ENCODE measurements at regions of chr2 and their contacts with region 1.

Region 1: GRCh38 chr2:40160751-40161218 is 291.1 kb downstream of the SLC8A1 start:
- DNase-seq: no peak
- ATAC-seq: peak in 3 of 8 donors; percentile 6 to 42 (median 27)
- H3K4me3 ChIP-seq: no peak overlapping the region
- H3K27ac ChIP-seq: peak overlapping the region in 3 of 10 donors; percentile 0 to 30 (median 4)
- H3K4me1 ChIP-seq: peaks cover 4 to 30% (median 18%) of the 10 kb centered on the region in 9 donors
- H3K27me3 ChIP-seq: no peaks in the 10 kb centered on the region
- CTCF ChIP-seq: no peak

Region 2: DNA sequence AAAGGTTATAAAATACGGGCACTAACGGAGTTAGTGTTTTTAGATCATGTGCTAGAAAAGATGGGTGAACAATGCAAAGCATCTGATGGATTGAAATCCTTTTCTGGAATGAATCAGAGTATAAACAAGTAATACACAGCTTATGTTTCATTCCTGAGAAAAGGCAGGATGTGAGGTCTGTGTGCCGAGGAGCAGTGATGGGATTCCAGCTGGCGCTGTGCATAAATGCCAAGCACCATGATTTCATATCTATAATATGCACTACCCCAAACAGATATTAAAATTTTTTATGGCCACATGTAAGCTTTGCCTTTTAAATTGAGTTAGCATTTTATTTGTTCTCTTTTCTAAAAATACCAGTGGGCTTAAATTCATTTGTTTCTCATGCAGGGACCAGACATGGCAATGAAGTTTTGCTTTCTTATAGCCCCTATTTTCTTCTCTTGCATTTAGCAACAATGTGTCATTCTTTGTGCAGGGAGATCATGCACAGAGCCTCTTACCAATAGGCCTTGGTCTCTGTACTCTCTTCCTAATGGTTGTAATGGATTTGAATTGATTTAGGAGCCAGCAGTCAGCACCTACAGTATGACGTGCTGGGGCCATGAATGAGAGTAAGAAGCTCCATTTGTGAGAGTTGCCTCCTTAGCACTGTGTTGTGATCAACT is 32.8 kb before region 1 on chr2:
- intact Hi-C with region 1: no loop called
- DNase-seq: no peak
- ATAC-seq: no peak
- H3K4me3 ChIP-seq: no peak overlapping the region
- H3K27ac ChIP-seq: peak overlapping the region in 6 of 10 donors; percentile 40 to 86 (median 81)
- H3K4me1 ChIP-seq: peaks cover 4 to 96% (median 59%) of the 10 kb centered on the region in 9 donors
- H3K27me3 ChIP-seq: no peaks in the 10 kb centered on the region
- CTCF ChIP-seq: no peak

Region 3: DNA sequence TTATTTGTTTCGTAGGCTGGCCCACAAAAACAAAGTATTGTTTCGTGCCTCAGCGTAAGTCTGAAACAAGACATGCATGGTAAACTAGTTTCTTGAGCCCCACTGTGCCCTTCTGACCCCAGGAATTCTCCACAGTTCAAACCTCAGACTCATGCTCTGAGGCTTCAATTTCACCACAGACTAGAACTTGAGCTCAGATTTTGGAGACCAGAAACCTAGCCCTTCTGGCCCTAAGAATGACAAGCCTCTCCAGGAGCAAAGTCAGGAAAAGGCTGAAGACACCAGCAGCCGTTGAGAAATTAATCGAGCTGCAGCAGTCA is 139.6 kb after region 1 on chr2:
- intact Hi-C with region 1: no loop called
- DNase-seq: no peak
- ATAC-seq: no peak
- H3K4me3 ChIP-seq: no peak overlapping the region
- H3K27ac ChIP-seq: no peak overlapping the region
- H3K4me1 ChIP-seq: peaks cover 0 to 45% (median 16%) of the 10 kb centered on the region in 9 donors
- H3K27me3 ChIP-seq: no peaks in the 10 kb centered on the region
- CTCF ChIP-seq: no peak

Region 4: GRCh38 chr2:40428439-40428838 is 267.7 kb after region 1 on chr2:
- intact Hi-C with region 1: loop called in 1 of 10 experiments (anchors 5 kb)
- DNase-seq: no peak
- ATAC-seq: peak in 3 of 8 donors; percentile 13 to 61 (median 31)
- H3K4me3 ChIP-seq: no peak overlapping the region
- H3K27ac ChIP-seq: peak overlapping the region in 3 of 10 donors; percentile 20 to 41 (median 36)
- H3K4me1 ChIP-seq: peaks cover 9 to 91% (median 52%) of the 10 kb centered on the region in 9 donors
- H3K27me3 ChIP-seq: no peaks in the 10 kb centered on the region
- CTCF ChIP-seq: no peak

Measured in heart right ventricle (tissue), 16 donors.